ENCODE measurements at regions of chr6 and their contacts with region 1.

Region 1: GRCh38 chr6:90008908-90009501 is 114.7 kb downstream of the GJA10 start:
- DNase-seq: peak; percentile 86
- H3K4me3 ChIP-seq: peak overlapping the region in 1 of 3 experiments; percentile 9
- H3K27ac ChIP-seq: peak overlapping the region; percentile 85
- H3K4me1 ChIP-seq: peaks cover 16% of the 10 kb centered on the region
- H3K27me3 ChIP-seq: no peaks in the 10 kb centered on the region
- CTCF ChIP-seq: no peak
- POLR2A ChIP-seq: no peak

Region 2: GRCh38 chr6:90044833-90045381 is 35.9 kb after region 1 on chr6:
- CTCF ChIA-PET with region 1: no interaction called
- POLR2A ChIA-PET with region 1: no interaction called
- dilution Hi-C with region 1: no loop called
- intact Hi-C with region 1: loop called (anchors 2 kb)
- DNase-seq: peak; percentile 76
- H3K4me3 ChIP-seq: no peak overlapping the region
- H3K27ac ChIP-seq: peak overlapping the region; percentile 62
- H3K4me1 ChIP-seq: peaks cover 16% of the 10 kb centered on the region
- H3K27me3 ChIP-seq: no peaks in the 10 kb centered on the region
- CTCF ChIP-seq: no peak
- POLR2A ChIP-seq: no peak

Region 3: GRCh38 chr6:90090866-90091265 is 81.9 kb after region 1 on chr6:
- CTCF ChIA-PET with region 1: no interaction called
- POLR2A ChIA-PET with region 1: no interaction called
- dilution Hi-C with region 1: no loop called
- intact Hi-C with region 1: no loop called
- DNase-seq: no peak
- H3K4me3 ChIP-seq: no peak overlapping the region
- H3K27ac ChIP-seq: no peak overlapping the region
- H3K4me1 ChIP-seq: peaks cover 12% of the 10 kb centered on the region
- H3K27me3 ChIP-seq: peaks cover 0 to 2% of the 10 kb centered on the region in 2 experiments
- CTCF ChIP-seq: no peak
- POLR2A ChIP-seq: no peak

Region 4: DNA sequence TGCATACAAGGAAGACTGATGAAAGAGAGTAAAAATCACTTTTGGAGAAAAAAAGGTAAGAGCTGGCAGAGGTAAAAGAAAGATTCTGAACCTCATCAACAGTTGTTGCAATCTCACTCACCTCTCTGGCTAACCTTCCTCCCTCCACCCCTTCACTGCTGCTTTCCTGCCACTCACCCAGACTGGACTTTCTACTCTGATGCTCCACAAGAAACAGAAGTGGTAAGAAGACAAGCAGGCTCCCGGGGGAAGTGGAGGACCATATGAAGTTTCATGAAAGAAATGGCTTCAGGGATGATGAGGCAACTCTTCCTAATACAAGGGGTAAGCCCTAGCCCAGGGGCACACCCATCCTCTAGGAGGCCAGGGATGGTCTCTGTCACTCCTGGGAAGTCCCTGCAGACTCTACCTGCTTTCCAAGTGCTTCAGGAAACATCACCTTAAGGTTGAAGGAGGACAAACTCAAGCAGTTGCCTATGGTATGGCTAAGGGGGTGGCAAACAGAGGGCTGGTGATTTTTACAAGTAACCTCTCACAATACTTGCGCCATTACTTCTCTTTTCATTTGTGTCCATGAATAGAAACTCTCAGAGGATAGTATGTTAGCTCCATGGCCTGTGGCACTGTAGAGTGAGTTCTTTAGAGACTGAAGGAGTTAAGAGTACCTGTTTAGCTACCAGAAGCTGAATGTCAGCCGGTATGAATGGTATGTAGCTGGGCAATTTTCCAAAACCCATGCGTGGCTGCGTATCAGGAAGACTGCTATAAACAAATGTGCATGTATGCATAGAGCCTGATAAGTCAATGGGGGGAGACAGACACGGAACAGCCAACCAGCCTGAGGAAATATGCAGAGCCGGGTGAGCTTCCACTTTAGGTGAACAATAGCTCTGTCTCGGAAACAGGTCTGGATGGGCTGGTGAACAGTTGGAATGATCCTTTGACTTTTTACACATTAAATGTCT is 175.6 kb after region 1 on chr6:
- CTCF ChIA-PET with region 1: no interaction called
- POLR2A ChIA-PET with region 1: no interaction called
- dilution Hi-C with region 1: no loop called
- intact Hi-C with region 1: no loop called
- DNase-seq: peak; percentile 92
- H3K4me3 ChIP-seq: no peak overlapping the region
- H3K27ac ChIP-seq: no peak overlapping the region
- H3K4me1 ChIP-seq: peaks cover 10% of the 10 kb centered on the region
- H3K27me3 ChIP-seq: no peaks in the 10 kb centered on the region
- CTCF ChIP-seq: no peak
- POLR2A ChIP-seq: no peak

Region 5: GRCh38 chr6:90296346-90297114 is 287.5 kb after region 1 on chr6 and contains the start of gene BACH2:
- CTCF ChIA-PET with region 1: no interaction called
- POLR2A ChIA-PET with region 1: no interaction called
- dilution Hi-C with region 1: no loop called
- intact Hi-C with region 1: loop called (anchors 1 kb)
- DNase-seq: peak; percentile 78
- H3K4me3 ChIP-seq: peak within 1 kb of the TSS; percentile 34 to 83 (median 57)
- H3K27ac ChIP-seq: no peak within 1 kb of the TSS
- H3K4me1 ChIP-seq: peaks cover 6% of the 10 kb centered on the region
- H3K27me3 ChIP-seq: peaks cover 12 to 38% of the 10 kb centered on the region in 2 experiments
- CTCF ChIP-seq: peak in 1 of 2 donors; percentile 30
- POLR2A ChIP-seq: no peak
- total RNA-seq, gene BACH2: 5.6 and 5.9 TPM in 2 replicates

Region 6: GRCh38 chr6:90369024-90369519 is 360.1 kb after region 1 on chr6:
- CTCF ChIA-PET with region 1: no interaction called
- POLR2A ChIA-PET with region 1: no interaction called
- dilution Hi-C with region 1: no loop called
- intact Hi-C with region 1: loop called (anchors 1 kb)
- DNase-seq: peak; percentile 98
- H3K4me3 ChIP-seq: peak overlapping the region in 1 of 3 experiments; percentile 12
- H3K27ac ChIP-seq: peak overlapping the region; percentile 78
- H3K4me1 ChIP-seq: peaks cover 16% of the 10 kb centered on the region
- H3K27me3 ChIP-seq: no peaks in the 10 kb centered on the region
- CTCF ChIP-seq: no peak
- POLR2A ChIP-seq: no peak

Region 7: GRCh38 chr6:90493332-90493731 is 484.3 kb after region 1 on chr6:
- CTCF ChIA-PET with region 1: no interaction called
- POLR2A ChIA-PET with region 1: no interaction called
- dilution Hi-C with region 1: no loop called
- intact Hi-C with region 1: loop called (anchors 5 kb)
- DNase-seq: peak; percentile 91
- H3K4me3 ChIP-seq: no peak overlapping the region
- H3K27ac ChIP-seq: peak overlapping the region; percentile 66
- H3K4me1 ChIP-seq: peaks cover 36% of the 10 kb centered on the region
- H3K27me3 ChIP-seq: no peaks in the 10 kb centered on the region
- CTCF ChIP-seq: no peak
- POLR2A ChIP-seq: peak; percentile 46